ENCODE measurements at regions of chr16 and their contacts with region 1.

Region 1: GRCh38 chr16:55333684-55334083 is 9.7 kb downstream of the IRX6 start:
- DNase-seq: no peak
- H3K4me3 Mint-ChIP-seq: no peak overlapping the region
- H3K27ac Mint-ChIP-seq: no peak overlapping the region
- H3K4me1 Mint-ChIP-seq: no peaks in the 10 kb centered on the region
- H3K27me3 Mint-ChIP-seq: peaks cover 34% of the 10 kb centered on the region

Region 2: DNA sequence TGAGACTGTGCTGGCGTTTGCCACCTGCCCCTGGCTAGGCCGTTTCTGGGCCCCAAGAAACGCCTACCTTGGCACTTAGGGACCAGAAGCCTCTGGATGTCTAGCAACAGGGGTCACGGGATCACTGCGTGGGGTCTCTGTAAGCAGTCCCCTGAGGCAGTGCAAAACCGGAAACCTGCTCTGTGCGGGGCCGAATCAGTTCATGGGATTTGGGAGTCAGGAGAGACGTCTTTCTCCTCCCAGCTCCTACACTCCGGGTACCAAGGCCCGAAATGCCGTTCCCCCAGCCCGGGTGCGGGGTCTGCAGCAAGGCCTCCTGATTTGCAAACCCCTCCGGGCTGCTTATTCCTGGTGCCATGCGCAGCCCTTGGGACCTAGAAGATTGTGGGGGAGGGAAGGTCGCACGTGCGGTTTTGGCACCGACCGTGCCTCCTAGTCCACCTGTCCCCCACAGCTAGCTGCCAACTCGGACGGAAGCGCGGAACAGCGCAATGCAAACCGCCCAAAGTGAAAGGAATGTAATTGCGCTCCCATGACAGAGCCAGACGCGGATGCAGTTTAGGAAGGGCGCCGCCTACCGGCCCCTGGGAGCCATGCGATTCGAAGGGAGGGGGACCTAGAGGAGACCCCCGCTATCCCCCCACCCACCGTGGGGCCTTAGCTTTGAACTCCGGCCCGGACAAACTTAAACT is 396.6 kb before region 1 on chr16:
- intact Hi-C with region 1: loop called (anchors 5 kb)
- DNase-seq: no peak
- H3K4me3 Mint-ChIP-seq: no peak overlapping the region
- H3K27ac Mint-ChIP-seq: peak overlapping the region; percentile 75
- H3K4me1 Mint-ChIP-seq: no peaks in the 10 kb centered on the region
- H3K27me3 Mint-ChIP-seq: peaks cover 79% of the 10 kb centered on the region

Region 3: DNA sequence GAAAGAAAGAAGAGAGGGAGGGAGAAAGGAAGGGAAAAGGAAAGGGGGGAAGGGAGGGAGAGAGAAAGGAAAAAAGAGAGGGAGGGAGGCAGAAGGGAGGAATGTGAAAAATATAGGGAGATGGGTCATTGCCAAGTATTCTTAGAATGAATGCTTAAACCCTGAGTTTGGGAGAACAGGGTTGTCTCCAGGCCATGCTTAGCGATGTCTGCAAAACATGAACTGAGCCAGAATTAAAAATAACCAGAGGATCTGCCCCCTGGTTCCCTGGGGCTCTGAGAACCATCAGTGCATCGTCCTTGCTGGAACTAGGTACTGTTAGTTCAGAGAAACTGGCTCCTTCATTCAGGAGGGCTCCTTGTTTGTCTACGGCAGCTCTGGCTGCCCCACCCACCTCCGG is 232.7 kb before region 1 on chr16:
- intact Hi-C with region 1: no loop called
- DNase-seq: no peak
- H3K4me3 Mint-ChIP-seq: no peak overlapping the region
- H3K27ac Mint-ChIP-seq: no peak overlapping the region
- H3K4me1 Mint-ChIP-seq: no peaks in the 10 kb centered on the region
- H3K27me3 Mint-ChIP-seq: no peaks in the 10 kb centered on the region